RWPE1 (cell line): ENCODE measurements at regions of chr17 and their contacts with region 1.

Region 1: DNA sequence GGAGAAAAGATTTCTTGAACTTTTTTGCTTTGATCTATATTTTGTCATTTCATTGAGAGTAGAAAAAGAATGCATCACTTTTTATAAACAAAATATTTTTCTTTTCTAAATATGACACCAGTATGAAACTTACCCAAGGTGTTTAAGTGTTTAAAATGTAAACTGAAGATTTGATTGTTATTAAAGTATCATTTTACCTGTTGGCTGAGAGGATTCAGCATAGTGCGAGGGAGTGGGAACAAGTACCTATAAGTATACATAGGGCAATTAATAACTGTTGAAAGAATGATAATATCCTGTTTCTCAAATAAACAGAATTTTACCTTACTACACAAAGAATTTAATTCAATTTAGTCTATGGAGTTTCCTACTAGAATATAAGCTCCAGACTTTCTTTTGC is 21.7 kb downstream of the PPM1E start:
- DNase-seq: no peak
- H3K27ac ChIP-seq: no peak overlapping the region
- CTCF ChIP-seq: no peak

Region 2: DNA sequence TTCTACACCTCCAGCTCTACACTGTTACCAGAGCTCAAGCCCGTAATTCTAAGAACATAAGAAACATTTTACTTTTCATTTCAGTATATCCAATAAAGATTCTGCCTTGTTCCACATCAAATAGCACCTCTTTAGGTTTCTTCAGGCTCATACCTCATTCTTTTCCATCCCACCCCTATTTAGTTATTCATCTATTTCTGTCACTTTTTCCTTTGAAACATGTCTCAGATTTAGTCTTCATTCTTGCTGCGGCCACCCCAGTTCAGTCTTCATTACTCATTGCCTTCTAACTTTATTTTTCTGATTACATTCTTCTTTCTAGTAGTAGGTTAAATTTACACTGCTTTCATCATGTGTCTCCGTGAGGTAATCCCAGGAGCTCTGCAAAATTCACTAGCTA is 11.8 kb after region 1 on chr17:
- CTCF ChIA-PET with region 1: no interaction called
- POLR2A ChIA-PET with region 1: no interaction called
- DNase-seq: no peak
- H3K27ac ChIP-seq: no peak overlapping the region
- CTCF ChIP-seq: no peak

Region 3: DNA sequence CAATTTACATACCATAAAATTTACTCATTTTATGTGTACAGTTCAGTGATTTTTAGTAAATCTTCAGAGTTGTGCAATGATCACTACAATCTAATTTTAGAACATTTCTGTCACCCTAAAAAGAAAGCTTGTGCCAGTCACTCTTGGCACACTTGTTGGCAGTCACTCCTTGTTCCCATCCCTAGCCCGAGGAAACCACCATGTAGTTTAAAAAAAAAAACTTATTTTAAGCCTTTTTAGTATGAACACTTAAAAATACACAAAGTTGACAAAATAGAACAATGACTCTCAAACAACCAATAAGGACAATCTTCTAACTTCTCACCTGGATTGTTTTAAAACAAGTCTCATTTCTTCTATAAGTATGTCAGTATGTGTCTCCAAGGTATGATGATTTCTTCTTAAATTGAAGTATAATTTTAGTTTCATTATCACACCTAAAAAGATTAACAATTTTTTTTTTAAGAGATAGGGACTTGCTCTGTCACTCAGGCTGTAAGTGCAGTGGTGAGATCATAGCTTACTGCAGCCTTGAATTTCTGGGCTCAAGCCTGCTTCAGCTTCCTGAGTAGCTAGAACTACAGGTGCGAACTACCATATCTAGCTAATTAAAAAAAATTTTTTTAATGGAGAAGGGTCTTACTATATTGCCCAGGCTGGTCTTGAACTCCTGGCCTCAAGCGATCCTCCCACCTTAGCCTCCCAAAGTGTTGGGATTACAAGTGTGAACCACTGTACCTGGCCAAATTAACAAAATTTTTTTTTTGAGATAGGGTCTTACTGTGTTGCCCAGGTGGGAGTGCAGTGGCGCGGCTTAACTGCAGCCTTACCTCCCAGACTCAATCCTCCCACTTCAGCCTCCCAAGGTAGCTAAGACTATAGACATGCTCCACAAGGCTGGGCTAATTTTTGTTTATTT is 31.5 kb after region 1 on chr17:
- CTCF ChIA-PET with region 1: interaction called, 3 read pairs
- POLR2A ChIA-PET with region 1: interaction called, 12 read pairs
- DNase-seq: no peak
- H3K27ac ChIP-seq: no peak overlapping the region
- CTCF ChIP-seq: no peak